CD8-positive, alpha-beta T cell (primary cell): ENCODE measurements at regions of chr11 and their contacts with region 1.

Region 1: GRCh38 chr11:66311965-66312548 is 4.8 kb downstream of the CD248 start:
- DNase-seq: peak; percentile 94 to 100 (median 99)
- ATAC-seq: peak; percentile 71
- H3K4me3 ChIP-seq: peak overlapping the region; percentile 51 to 79
- H3K4me3 Mint-ChIP-seq: peak overlapping the region; percentile 93
- H3K27ac ChIP-seq: peak overlapping the region; percentile 76 to 98
- H3K27ac Mint-ChIP-seq: peak overlapping the region; percentile 99
- H3K4me1 ChIP-seq: peaks cover 6% of the 10 kb centered on the region
- H3K4me1 Mint-ChIP-seq: peaks cover 20% of the 10 kb centered on the region
- H3K27me3 ChIP-seq: no peaks in the 10 kb centered on the region
- H3K27me3 Mint-ChIP-seq: no peaks in the 10 kb centered on the region
- CTCF ChIP-seq: peak; percentile 98

Region 2: DNA sequence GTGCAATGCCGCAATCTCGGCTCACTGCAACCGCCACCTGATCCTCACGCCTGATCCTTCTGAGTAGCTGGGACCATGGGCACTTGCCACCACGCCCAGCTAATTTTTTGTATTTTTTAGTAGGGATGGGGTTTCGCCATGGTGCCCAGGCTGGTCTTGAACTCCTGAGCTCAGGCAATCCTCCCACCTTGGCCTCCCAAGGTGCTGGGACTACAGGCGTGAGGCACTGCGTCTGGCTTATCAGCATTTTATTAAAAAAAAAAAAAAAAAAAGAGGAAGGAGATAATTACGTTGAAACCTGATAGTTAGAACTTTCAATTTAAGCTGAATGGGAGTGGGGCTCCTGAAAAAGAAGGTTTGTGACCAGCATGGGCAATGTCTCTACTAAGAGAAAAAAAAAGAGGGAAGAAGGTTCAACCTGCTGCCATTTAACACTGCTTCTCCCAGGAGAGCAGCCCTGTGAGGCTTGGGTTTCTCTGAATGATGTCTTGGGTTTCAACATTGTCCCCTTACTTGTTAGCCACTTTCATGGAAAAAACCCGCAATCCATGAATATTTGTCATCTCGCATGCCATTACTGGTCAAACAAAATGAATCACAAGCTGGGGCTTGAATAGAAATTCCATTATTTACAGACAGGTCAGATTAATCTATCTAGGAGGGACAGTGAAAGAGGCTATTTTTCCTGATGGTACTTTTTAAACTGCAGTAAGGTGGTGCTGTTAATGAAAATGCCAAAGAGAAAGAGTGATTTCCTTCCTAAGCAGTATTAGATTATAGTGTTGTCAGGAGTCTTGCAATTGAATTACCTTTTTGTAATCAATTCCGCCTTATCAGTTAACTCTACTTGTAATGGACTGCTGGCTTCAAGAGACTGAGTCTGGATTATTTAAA is 169.4 kb before region 1 on chr11:
- CTCF ChIA-PET with region 1: no interaction called
- POLR2A ChIA-PET with region 1: no interaction called
- intact Hi-C with region 1: no loop called
- DNase-seq: no peak
- ATAC-seq: no peak
- H3K4me3 ChIP-seq: no peak overlapping the region
- H3K4me3 Mint-ChIP-seq: no peak overlapping the region
- H3K27ac ChIP-seq: no peak overlapping the region
- H3K27ac Mint-ChIP-seq: no peak overlapping the region
- H3K4me1 ChIP-seq: peaks cover 13% of the 10 kb centered on the region
- H3K4me1 Mint-ChIP-seq: peaks cover 53% of the 10 kb centered on the region
- H3K27me3 ChIP-seq: no peaks in the 10 kb centered on the region
- H3K27me3 Mint-ChIP-seq: no peaks in the 10 kb centered on the region
- CTCF ChIP-seq: no peak

Region 3: DNA sequence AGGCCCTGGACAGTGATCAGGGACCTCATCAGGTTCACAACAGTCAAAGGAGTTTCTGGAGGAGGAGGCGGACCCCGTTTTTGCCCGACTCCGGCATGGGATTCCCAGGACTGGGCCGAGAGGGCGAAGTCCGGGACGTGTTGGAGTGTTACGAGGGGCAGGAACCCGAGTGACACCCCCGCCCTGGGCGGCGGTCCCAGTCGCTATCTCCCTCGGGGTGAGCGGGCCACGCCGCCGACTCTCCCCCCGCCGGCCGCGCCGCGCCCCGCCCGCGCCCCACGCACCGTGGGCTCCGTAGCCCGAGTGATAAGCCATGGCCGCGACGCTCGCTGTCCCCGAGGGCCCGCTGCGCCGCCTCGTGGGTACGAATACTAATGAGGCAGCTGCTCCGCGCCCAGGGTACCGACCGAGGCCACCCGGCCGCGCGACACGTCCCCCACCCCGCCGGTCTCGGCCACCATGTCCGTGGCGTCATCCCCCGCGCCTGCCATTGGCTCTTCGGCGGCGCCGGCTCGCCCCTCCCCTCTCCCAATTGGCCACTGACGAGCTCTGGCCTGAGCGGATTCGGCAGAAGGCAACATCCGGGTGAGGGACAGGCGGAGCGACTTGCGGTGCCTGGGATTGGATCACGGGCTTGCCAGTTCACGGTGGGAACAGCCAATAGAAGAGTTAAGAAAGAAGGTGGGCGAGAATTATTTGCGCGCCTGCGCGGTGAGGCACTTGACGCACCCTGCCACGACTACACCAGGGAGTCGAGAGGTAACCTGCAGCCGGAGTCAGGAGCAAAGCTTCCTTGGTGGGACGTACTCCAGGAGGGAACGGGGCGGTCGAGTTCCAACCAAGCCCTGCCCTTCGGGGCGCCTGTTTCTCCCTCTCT is 23.1 kb before region 1 on chr11 and contains the start of gene YIF1A:
- CTCF ChIA-PET with region 1: interaction called, 34 read pairs
- POLR2A ChIA-PET with region 1: interaction called, 22 read pairs
- intact Hi-C with region 1: loop called (anchors 1 kb)
- DNase-seq: peak; percentile 96 to 99 (median 98)
- ATAC-seq: peak; percentile 90
- H3K4me3 ChIP-seq: peak within 1 kb of the TSS; percentile 67 to 80
- H3K4me3 Mint-ChIP-seq: peak within 1 kb of the TSS; percentile 82
- H3K27ac ChIP-seq: peak within 1 kb of the TSS; percentile 75 to 81
- H3K27ac Mint-ChIP-seq: peak within 1 kb of the TSS; percentile 85
- H3K4me1 ChIP-seq: peaks cover 27% of the 10 kb centered on the region
- H3K4me1 Mint-ChIP-seq: peaks cover 42% of the 10 kb centered on the region
- H3K27me3 ChIP-seq: peaks cover 16 to 17% of the 10 kb centered on the region in 2 experiments
- H3K27me3 Mint-ChIP-seq: peaks cover 13% of the 10 kb centered on the region
- CTCF ChIP-seq: no peak
- total RNA-seq, gene YIF1A: 16.8 to 17.1 TPM

Region 4: GRCh38 chr11:66336234-66337102 is 24.4 kb after region 1 on chr11 and contains the start of gene RIN1:
- CTCF ChIA-PET with region 1: interaction called, 140 read pairs
- POLR2A ChIA-PET with region 1: interaction called, 9 read pairs
- intact Hi-C with region 1: no loop called
- DNase-seq: peak in 5 of 9 experiments; percentile 47 to 86 (median 76)
- ATAC-seq: peak; percentile 83
- H3K4me3 ChIP-seq: peak within 1 kb of the TSS; percentile 52 to 77
- H3K4me3 Mint-ChIP-seq: peak within 1 kb of the TSS; percentile 87
- H3K27ac ChIP-seq: peak within 1 kb of the TSS; percentile 26 to 75
- H3K27ac Mint-ChIP-seq: peak within 1 kb of the TSS; percentile 75
- H3K4me1 ChIP-seq: peaks cover 26% of the 10 kb centered on the region
- H3K4me1 Mint-ChIP-seq: peaks cover 22% of the 10 kb centered on the region
- H3K27me3 ChIP-seq: no peaks in the 10 kb centered on the region
- H3K27me3 Mint-ChIP-seq: no peaks in the 10 kb centered on the region
- CTCF ChIP-seq: no peak
- total RNA-seq, gene RIN1: 1.5 to 3.2 TPM

Region 5: GRCh38 chr11:66386171-66387069 is 74.4 kb after region 1 on chr11:
- CTCF ChIA-PET with region 1: interaction called, 56 read pairs
- POLR2A ChIA-PET with region 1: interaction called, 9 read pairs
- intact Hi-C with region 1: loop called (anchors 1 kb)
- DNase-seq: peak; percentile 67 to 90 (median 83)
- ATAC-seq: peak; percentile 75
- H3K4me3 ChIP-seq: no peak overlapping the region
- H3K4me3 Mint-ChIP-seq: peak overlapping the region; percentile 18
- H3K27ac ChIP-seq: no peak overlapping the region
- H3K27ac Mint-ChIP-seq: no peak overlapping the region
- H3K4me1 ChIP-seq: peaks cover 5% of the 10 kb centered on the region
- H3K4me1 Mint-ChIP-seq: peaks cover 8% of the 10 kb centered on the region
- H3K27me3 ChIP-seq: no peaks in the 10 kb centered on the region
- H3K27me3 Mint-ChIP-seq: no peaks in the 10 kb centered on the region
- CTCF ChIP-seq: peak; percentile 77

Region 6: DNA sequence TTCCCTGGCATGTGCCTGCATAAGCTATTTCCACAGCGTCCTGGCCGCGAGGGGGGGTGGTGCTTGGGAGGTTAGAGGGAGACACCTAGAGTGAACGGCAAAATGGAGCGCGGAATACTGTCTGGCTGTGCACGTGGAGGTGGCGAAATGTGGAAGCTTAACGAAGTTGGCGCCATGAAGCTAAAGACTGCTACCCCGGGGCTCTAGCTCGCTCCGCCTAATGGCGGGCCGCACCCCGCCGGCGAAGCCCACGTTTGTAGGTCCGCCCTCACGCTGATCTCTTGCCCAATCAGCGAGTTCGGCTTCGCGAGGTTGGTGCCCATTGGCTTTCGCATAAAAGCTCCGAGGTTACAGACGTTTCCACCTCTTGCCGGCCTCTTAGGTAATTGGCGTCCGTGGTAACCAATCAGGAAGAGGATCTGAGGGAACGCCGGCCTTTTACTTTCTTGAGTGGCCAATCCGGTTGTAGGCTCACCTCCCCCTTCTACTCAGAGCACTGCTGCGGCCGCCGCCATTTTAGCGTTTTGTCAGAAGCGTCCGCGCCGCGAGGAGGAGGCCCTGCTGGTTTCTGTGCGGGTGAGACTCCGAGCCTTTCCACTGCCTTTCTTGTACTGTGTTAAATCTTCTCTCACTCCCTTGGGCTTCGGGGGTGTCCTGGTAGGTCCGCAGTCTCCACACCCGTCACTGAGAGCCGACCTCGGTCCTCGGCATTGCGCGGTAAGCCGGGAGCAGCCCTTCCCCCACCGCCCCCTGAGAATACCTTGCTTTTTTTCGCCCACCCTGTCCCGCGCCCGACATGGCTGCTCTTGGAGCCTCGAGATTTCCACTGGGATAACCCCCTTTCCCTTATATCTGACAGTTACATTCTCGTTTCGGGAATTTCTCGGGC is 326.4 kb after region 1 on chr11 and contains the start of gene RBM4:
- CTCF ChIA-PET with region 1: no interaction called
- POLR2A ChIA-PET with region 1: no interaction called
- intact Hi-C with region 1: loop called in 1 of 2 experiments (anchors 10 kb)
- DNase-seq: peak; percentile 92 to 100 (median 94)
- ATAC-seq: peak; percentile 89
- H3K4me3 ChIP-seq: peak within 1 kb of the TSS; percentile 87 to 88
- H3K4me3 Mint-ChIP-seq: peak within 1 kb of the TSS; percentile 98
- H3K27ac ChIP-seq: peak within 1 kb of the TSS; percentile 89 to 92
- H3K27ac Mint-ChIP-seq: peak within 1 kb of the TSS; percentile 97
- H3K4me1 ChIP-seq: peaks cover 53% of the 10 kb centered on the region
- H3K4me1 Mint-ChIP-seq: peaks cover 66% of the 10 kb centered on the region
- H3K27me3 ChIP-seq: no peaks in the 10 kb centered on the region
- H3K27me3 Mint-ChIP-seq: no peaks in the 10 kb centered on the region
- CTCF ChIP-seq: no peak
- total RNA-seq, gene RBM4: 183 to 191 TPM